CD4-positive, alpha-beta T cell (primary cell): ENCODE measurements at regions of chr1 and their contacts with region 1.

Region 1: GRCh38 chr1:157490467-157491165 is 61.7 kb downstream of the FCRL5 start:
- DNase-seq: peak in 13 of 14 experiments; percentile 7 to 52 (median 26)
- ATAC-seq: no peak
- H3K4me3 ChIP-seq: no peak overlapping the region
- H3K4me3 Mint-ChIP-seq: no peak overlapping the region
- H3K27ac ChIP-seq: no peak overlapping the region
- H3K27ac Mint-ChIP-seq: no peak overlapping the region
- H3K4me1 ChIP-seq: no peaks in the 10 kb centered on the region
- H3K4me1 Mint-ChIP-seq: no peaks in the 10 kb centered on the region
- H3K27me3 ChIP-seq: peaks cover 0 to 8% of the 10 kb centered on the region in 2 experiments
- H3K27me3 Mint-ChIP-seq: peaks cover 35% of the 10 kb centered on the region
- CTCF ChIP-seq: peak; percentile 39

Region 2: GRCh38 chr1:157090196-157090647 is 400.4 kb before region 1 on chr1:
- CTCF ChIA-PET with region 1: no interaction called
- POLR2A ChIA-PET with region 1: no interaction called
- intact Hi-C with region 1: loop called in 1 of 2 experiments (anchors 5 kb)
- DNase-seq: peak; percentile 78 to 92 (median 86)
- ATAC-seq: peak; percentile 83
- H3K4me3 ChIP-seq: no peak overlapping the region
- H3K4me3 Mint-ChIP-seq: no peak overlapping the region
- H3K27ac ChIP-seq: no peak overlapping the region
- H3K27ac Mint-ChIP-seq: no peak overlapping the region
- H3K4me1 ChIP-seq: peaks cover 7% of the 10 kb centered on the region
- H3K4me1 Mint-ChIP-seq: peaks cover 5% of the 10 kb centered on the region
- H3K27me3 ChIP-seq: peaks cover 0 to 2% of the 10 kb centered on the region in 2 experiments
- H3K27me3 Mint-ChIP-seq: peaks cover 6% of the 10 kb centered on the region
- CTCF ChIP-seq: peak; percentile 95

Region 3: DNA sequence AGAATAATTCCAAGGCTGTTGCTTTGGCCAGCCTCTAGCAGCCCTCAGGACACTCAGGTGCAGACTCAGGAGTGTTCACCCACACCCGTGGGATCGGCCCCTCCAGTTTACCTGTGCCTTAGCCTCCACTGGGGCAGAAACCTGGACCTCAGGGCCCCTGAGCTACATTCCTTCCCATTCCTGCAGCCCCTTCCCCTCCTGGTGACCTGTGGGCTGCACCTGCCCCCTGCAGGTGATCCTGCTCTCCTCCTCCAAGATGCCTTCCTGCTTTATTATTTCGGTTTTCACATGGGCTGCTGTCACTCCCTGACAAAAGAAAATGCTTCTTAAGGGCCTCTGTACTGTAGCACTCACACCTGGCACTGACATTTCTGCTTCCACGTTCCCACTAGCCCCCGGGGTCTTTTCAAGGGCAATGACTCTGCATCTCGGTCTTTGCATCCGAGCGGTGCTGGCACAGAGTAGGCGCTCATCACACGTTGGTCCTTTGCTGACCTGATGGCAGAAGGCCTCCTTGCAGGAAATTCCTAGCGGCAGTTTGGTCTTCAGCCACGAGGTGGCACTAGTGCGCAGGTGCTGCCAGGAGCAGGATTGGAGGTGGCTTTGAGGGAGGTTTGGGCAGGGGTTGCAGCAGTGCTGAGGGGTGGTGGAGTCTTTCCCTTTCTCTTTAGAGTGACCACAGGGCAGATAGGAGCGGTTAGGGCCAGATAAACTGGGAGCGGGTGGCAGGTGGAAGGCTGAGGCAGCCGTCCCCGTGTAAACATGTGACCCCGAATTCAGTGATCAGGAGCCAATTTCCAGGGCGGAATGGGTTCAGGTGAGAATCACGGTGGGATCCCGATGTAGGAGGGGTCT is 327.1 kb before region 1 on chr1:
- CTCF ChIA-PET with region 1: no interaction called
- POLR2A ChIA-PET with region 1: no interaction called
- intact Hi-C with region 1: loop called (anchors 5 kb)
- DNase-seq: peak; percentile 52 to 79 (median 68)
- ATAC-seq: peak; percentile 77
- H3K4me3 ChIP-seq: no peak overlapping the region
- H3K4me3 Mint-ChIP-seq: no peak overlapping the region
- H3K27ac ChIP-seq: no peak overlapping the region
- H3K27ac Mint-ChIP-seq: no peak overlapping the region
- H3K4me1 ChIP-seq: peaks cover 8% of the 10 kb centered on the region
- H3K4me1 Mint-ChIP-seq: peaks cover 5% of the 10 kb centered on the region
- H3K27me3 ChIP-seq: peaks cover 0 to 4% of the 10 kb centered on the region in 2 experiments
- H3K27me3 Mint-ChIP-seq: peaks cover 12% of the 10 kb centered on the region
- CTCF ChIP-seq: peak; percentile 92

Region 4: DNA sequence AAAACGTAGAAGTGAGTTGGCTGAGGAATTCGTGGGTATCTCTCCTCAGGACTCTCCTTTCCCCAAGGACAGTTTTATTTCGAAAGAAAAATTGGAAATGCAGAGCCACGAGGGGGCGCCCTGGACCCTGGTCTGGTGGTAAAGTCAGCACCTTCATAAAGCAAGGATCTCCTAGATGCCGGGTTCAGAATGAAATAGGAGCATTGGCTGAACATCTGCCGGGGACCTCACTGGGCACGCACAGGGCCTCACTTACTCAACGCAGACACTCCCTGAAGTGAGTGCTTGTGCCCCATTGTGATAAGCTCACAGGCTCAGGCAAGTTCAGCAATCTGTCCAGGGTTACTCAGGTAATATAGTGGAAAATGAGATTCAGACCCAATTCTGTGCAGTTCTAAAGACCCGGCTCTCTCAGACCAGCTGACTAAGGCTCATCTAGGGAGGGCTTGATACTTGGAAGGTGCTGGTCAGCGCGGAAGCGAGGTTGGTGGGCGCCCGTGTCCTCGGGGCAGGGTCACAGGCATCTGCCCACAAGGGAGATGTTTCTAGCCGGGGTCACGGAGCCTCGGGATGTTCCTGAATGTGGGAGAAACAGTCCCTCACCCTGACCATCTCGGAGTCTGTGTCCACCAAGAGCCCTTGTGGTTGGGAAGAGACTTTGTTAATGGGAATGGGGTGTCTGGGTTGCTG is 296.8 kb before region 1 on chr1:
- CTCF ChIA-PET with region 1: no interaction called
- POLR2A ChIA-PET with region 1: no interaction called
- intact Hi-C with region 1: loop called (anchors 5 to 10 kb)
- DNase-seq: peak in 12 of 14 experiments; percentile 15 to 58 (median 34)
- ATAC-seq: no peak
- H3K4me3 ChIP-seq: no peak overlapping the region
- H3K4me3 Mint-ChIP-seq: no peak overlapping the region
- H3K27ac ChIP-seq: no peak overlapping the region
- H3K27ac Mint-ChIP-seq: no peak overlapping the region
- H3K4me1 ChIP-seq: no peaks in the 10 kb centered on the region
- H3K4me1 Mint-ChIP-seq: no peaks in the 10 kb centered on the region
- H3K27me3 ChIP-seq: peaks cover 19 to 27% of the 10 kb centered on the region in 2 experiments
- H3K27me3 Mint-ChIP-seq: peaks cover 72% of the 10 kb centered on the region
- CTCF ChIP-seq: peak; percentile 54

Region 5: DNA sequence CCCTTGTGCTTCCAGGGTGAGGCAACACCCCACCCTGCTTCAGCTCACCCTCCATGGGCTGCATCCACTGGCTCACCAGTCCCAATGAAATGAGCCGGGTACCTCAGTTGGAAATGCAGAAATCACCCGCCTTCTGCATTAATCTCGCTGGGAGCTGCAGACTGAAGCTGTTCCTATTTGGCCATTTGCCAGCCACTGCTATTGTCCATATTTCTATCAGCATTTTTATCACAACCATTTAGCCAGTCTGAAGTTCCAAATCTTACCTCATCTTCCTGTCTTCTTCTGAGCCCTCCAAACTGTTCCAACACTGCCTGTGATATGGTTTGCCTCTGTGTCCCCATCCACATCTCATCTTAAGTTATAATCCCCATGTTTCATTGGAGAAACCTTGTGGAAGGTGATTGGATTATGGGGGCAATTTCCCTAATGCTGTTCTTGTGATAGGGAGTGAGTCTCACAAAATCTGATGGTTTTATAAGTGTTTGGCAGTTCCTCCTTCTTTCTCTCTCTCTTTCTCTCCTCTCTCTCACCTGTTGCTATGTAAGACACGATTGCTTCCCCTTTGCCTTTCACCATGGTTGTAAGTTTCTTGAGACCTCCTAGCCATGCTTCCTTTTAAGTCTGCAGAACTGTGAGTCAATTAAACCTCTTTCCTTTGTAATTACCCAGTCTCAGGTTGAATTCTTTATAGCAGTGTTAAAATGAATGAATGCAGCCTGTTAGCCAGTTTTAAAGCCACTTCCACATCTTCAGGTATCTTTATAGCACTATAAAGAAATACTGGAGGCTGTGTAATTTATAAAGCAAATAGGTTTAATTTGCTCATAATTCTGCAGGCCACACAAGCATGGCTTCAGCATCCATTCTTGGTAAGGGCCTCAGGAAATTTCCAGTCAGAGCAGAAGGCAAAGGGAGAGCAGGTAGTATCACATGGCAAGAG is 141.8 kb before region 1 on chr1:
- CTCF ChIA-PET with region 1: no interaction called
- POLR2A ChIA-PET with region 1: no interaction called
- intact Hi-C with region 1: no loop called
- DNase-seq: no peak
- ATAC-seq: no peak
- H3K4me3 ChIP-seq: no peak overlapping the region
- H3K4me3 Mint-ChIP-seq: no peak overlapping the region
- H3K27ac ChIP-seq: no peak overlapping the region
- H3K27ac Mint-ChIP-seq: no peak overlapping the region
- H3K4me1 ChIP-seq: no peaks in the 10 kb centered on the region
- H3K4me1 Mint-ChIP-seq: no peaks in the 10 kb centered on the region
- H3K27me3 ChIP-seq: peaks cover 13 to 17% of the 10 kb centered on the region in 2 experiments
- H3K27me3 Mint-ChIP-seq: peaks cover 60% of the 10 kb centered on the region
- CTCF ChIP-seq: no peak

Region 6: GRCh38 chr1:157369808-157370521 is 120.7 kb before region 1 on chr1:
- CTCF ChIA-PET with region 1: no interaction called
- POLR2A ChIA-PET with region 1: no interaction called
- intact Hi-C with region 1: loop called (anchors 5 kb)
- DNase-seq: peak in 8 of 14 experiments; percentile 4 to 62 (median 32)
- ATAC-seq: no peak
- H3K4me3 ChIP-seq: no peak overlapping the region
- H3K4me3 Mint-ChIP-seq: no peak overlapping the region
- H3K27ac ChIP-seq: no peak overlapping the region
- H3K27ac Mint-ChIP-seq: no peak overlapping the region
- H3K4me1 ChIP-seq: no peaks in the 10 kb centered on the region
- H3K4me1 Mint-ChIP-seq: no peaks in the 10 kb centered on the region
- H3K27me3 ChIP-seq: peaks cover 3 to 6% of the 10 kb centered on the region in 2 experiments
- H3K27me3 Mint-ChIP-seq: peaks cover 18% of the 10 kb centered on the region
- CTCF ChIP-seq: peak; percentile 95

Region 7: GRCh38 chr1:157455318-157455717 is 35.3 kb before region 1 on chr1:
- CTCF ChIA-PET with region 1: no interaction called
- POLR2A ChIA-PET with region 1: no interaction called
- intact Hi-C with region 1: no loop called
- DNase-seq: no peak
- ATAC-seq: no peak
- H3K4me3 ChIP-seq: no peak overlapping the region
- H3K4me3 Mint-ChIP-seq: no peak overlapping the region
- H3K27ac ChIP-seq: no peak overlapping the region
- H3K27ac Mint-ChIP-seq: no peak overlapping the region
- H3K4me1 ChIP-seq: no peaks in the 10 kb centered on the region
- H3K4me1 Mint-ChIP-seq: no peaks in the 10 kb centered on the region
- H3K27me3 ChIP-seq: no peaks in the 10 kb centered on the region
- H3K27me3 Mint-ChIP-seq: peaks cover 16% of the 10 kb centered on the region
- CTCF ChIP-seq: no peak